ENCODE measurements at regions of chr10 and their contacts with region 1.

Region 1: GRCh38 chr10:124741281-124741921 is 2.8 kb downstream of the FAM53B start:
- DNase-seq: peak; percentile 71 to 86 (median 84)
- ATAC-seq: peak; percentile 65
- H3K4me3 ChIP-seq: peak overlapping the region in 1 of 2 donors; percentile 83
- H3K27ac ChIP-seq: peak overlapping the region; percentile 72 to 93
- H3K4me1 ChIP-seq: peaks cover 64 to 74% of the 10 kb centered on the region in 2 donors
- H3K27me3 ChIP-seq: no peaks in the 10 kb centered on the region
- CTCF ChIP-seq: peak; percentile 68 to 90

Region 2: DNA sequence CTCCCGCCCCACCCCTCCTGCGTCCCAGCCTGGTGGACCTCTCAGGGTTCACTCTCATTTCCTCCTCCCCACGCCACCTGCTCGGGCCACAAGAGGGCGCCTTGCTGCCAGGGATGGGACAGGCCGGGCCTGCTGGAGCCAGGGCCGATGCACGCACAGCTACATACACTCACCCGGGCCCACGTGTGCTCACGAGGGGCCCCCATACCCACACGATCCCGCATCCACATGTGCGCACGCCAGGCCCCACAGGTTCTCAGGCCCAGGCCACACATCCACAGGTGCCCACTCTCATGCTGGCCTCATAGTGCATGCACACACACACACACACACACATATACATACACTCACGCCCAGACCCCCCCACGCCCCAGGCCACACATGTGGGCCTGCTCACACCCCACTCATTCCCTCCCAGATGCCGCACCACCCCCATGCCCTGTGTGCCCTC is 211.2 kb before region 1 on chr10:
- intact Hi-C with region 1: loop called in 1 of 2 experiments (anchors 5 kb)
- DNase-seq: peak; percentile 60 to 98 (median 88)
- ATAC-seq: peak; percentile 95
- H3K4me3 ChIP-seq: no peak overlapping the region
- H3K27ac ChIP-seq: no peak overlapping the region
- H3K4me1 ChIP-seq: peaks cover 0 to 21% of the 10 kb centered on the region in 2 donors
- H3K27me3 ChIP-seq: no peaks in the 10 kb centered on the region
- CTCF ChIP-seq: peak; percentile 82 to 92

Region 3: DNA sequence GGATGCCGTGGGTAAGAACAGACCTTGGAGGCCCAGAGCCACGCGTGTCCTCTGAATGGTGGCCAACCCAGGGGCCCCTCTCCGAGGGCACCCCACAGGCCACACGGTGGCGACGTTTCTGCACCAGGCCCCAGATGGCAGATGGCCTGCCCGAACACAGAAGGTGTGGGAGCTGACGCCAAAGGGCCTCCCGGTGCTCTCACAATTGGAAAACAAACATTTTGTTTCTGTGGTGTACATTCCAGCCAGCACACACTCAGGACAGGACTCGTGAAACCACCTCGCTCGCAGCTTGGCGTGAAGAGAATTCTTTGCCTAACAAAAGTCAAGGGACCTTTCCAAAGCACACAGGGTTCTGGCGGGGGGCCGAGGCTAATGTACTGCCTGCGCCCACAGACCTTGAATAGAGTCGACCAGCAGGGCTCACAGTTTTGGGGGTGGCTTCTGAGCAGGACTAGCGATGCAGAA is 109.3 kb before region 1 on chr10:
- intact Hi-C with region 1: loop called in 1 of 2 experiments (anchors 5 kb)
- DNase-seq: peak; percentile 47 to 90 (median 78)
- ATAC-seq: peak; percentile 91
- H3K4me3 ChIP-seq: no peak overlapping the region
- H3K27ac ChIP-seq: peak overlapping the region; percentile 57 to 61
- H3K4me1 ChIP-seq: peaks cover 39 to 75% of the 10 kb centered on the region in 2 donors
- H3K27me3 ChIP-seq: no peaks in the 10 kb centered on the region
- CTCF ChIP-seq: peak; percentile 28 to 60

Region 4: DNA sequence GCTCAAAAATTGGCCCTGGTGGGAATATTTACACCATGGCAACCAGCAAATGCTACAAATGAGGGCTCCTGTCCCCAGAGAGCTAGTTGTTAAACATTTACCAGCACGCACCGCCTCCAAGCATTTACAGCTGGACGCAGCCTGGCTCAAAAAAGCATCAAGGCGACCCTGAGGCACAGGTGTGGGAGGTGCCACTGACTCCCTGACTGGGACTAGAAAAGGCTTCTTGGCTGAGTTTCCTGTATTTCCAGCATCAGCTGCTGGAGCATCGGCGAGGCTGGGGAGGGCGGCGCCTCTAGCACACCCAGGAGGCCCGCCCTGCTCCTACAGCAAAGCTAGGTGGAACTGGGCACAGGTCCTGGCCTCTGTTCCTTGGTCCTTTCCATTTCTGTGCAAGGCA is 157.1 kb after region 1 on chr10:
- intact Hi-C with region 1: no loop called
- DNase-seq: no peak
- ATAC-seq: no peak
- H3K4me3 ChIP-seq: no peak overlapping the region
- H3K27ac ChIP-seq: no peak overlapping the region
- H3K4me1 ChIP-seq: no peaks in the 10 kb centered on the region
- H3K27me3 ChIP-seq: peaks cover 0 to 21% of the 10 kb centered on the region in 2 donors
- CTCF ChIP-seq: no peak

Measured in left lung (tissue), 14 donors.